CD8-positive, alpha-beta T cell (primary cell): ENCODE measurements at regions of chr11 and their contacts with region 1.

Region 1: DNA sequence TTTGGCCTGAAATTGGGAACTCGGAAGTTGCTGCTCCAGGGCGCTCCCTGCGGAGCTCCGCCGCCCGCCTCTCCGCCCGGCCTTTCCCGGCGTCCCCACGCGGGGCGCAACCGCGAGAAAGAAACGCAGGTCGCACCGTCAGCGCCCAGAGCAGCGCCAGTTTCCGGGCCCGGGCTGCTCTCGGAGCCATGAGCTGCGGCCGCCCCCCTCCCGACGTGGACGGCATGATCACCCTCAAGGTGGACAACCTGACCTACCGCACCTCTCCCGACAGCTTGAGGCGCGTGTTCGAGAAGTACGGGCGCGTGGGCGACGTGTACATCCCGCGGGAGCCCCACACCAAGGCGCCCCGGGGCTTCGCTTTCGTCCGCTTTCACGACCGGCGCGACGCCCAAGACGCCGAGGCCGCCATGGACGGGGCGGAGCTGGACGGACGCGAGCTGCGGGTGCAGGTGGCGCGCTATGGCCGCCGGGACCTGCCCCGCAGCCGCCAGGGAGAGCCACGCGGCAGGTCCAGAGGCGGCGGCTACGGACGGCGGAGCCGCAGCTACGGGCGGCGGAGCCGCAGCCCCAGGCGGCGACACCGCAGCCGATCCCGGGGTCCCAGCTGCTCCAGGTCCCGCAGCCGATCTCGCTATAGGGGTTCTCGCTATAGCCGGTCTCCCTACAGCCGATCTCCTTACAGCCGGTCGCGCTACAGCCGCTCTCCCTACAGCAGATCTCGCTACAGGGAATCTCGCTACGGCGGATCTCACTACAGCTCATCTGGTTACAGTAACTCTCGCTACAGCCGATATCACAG is 521 bp downstream of the SRSF8 start:
- DNase-seq: peak; percentile 45 to 88 (median 71)
- ATAC-seq: peak; percentile 61
- H3K4me3 ChIP-seq: peak overlapping the region; percentile 85 to 94
- H3K4me3 Mint-ChIP-seq: peak overlapping the region; percentile 96
- H3K27ac ChIP-seq: peak overlapping the region; percentile 90 to 92
- H3K27ac Mint-ChIP-seq: peak overlapping the region; percentile 97
- H3K4me1 ChIP-seq: peaks cover 23% of the 10 kb centered on the region
- H3K4me1 Mint-ChIP-seq: peaks cover 33% of the 10 kb centered on the region
- H3K27me3 ChIP-seq: no peaks in the 10 kb centered on the region
- H3K27me3 Mint-ChIP-seq: no peaks in the 10 kb centered on the region
- CTCF ChIP-seq: peak; percentile 46

Region 2: DNA sequence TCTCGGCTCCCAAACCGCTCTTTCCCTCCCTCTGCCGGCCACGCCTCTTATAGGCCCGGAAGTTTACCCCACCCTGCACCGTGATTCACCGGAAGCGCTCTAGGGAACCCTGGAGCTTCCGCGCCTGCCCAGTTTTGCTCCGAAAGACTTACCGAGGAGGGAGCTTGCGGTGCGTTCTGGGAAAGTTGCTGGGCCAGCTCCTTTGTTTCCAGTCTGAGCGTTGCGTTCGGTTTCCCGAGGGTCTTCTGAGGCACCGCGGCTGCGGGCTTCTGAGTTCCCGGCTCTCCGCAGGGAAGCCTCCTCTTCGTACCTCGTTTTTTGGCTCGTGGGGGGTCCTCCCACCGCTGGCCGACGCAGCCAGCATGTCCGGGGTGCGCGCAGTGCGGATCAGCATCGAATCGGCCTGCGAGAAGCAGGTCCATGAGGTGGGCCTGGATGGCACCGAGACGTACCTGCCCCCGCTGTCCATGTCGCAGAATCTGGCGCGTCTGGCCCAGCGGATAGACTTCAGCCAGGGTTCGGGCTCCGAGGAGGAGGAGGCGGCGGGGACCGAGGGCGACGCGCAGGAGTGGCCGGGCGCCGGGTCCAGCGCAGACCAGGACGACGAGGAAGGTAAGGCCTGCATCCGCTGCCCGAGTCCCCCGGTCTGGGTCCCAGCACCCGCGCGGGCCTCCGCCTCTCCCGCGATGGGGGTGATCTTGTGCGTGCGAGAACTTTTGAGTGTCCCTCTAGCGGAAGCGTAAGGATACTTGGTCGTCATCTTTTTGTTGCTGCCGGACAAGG is 1282.9 kb before region 1 on chr11 and contains the start of gene MED17:
- CTCF ChIA-PET with region 1: no interaction called
- POLR2A ChIA-PET with region 1: interaction called, 6 read pairs
- intact Hi-C with region 1: loop called in 1 of 2 experiments (anchors 10 kb)
- DNase-seq: peak; percentile 68 to 94 (median 89)
- ATAC-seq: peak; percentile 94
- H3K4me3 ChIP-seq: peak within 1 kb of the TSS; percentile 99 to 100
- H3K4me3 Mint-ChIP-seq: peak within 1 kb of the TSS; percentile 96
- H3K27ac ChIP-seq: peak within 1 kb of the TSS; percentile 94 to 96
- H3K27ac Mint-ChIP-seq: peak within 1 kb of the TSS; percentile 94
- H3K4me1 ChIP-seq: peaks cover 28% of the 10 kb centered on the region
- H3K4me1 Mint-ChIP-seq: peaks cover 40% of the 10 kb centered on the region
- H3K27me3 ChIP-seq: no peaks in the 10 kb centered on the region
- H3K27me3 Mint-ChIP-seq: no peaks in the 10 kb centered on the region
- CTCF ChIP-seq: peak; percentile 52
- total RNA-seq, gene MED17: 63.7 to 65.9 TPM

Region 3: GRCh38 chr11:94876645-94877442 is 190.4 kb before region 1 on chr11:
- CTCF ChIA-PET with region 1: no interaction called
- POLR2A ChIA-PET with region 1: no interaction called
- intact Hi-C with region 1: no loop called
- DNase-seq: peak in 7 of 9 experiments; percentile 13 to 44 (median 37)
- ATAC-seq: peak; percentile 56
- H3K4me3 ChIP-seq: no peak overlapping the region
- H3K4me3 Mint-ChIP-seq: no peak overlapping the region
- H3K27ac ChIP-seq: no peak overlapping the region
- H3K27ac Mint-ChIP-seq: no peak overlapping the region
- H3K4me1 ChIP-seq: peaks cover 9% of the 10 kb centered on the region
- H3K4me1 Mint-ChIP-seq: peaks cover 14% of the 10 kb centered on the region
- H3K27me3 ChIP-seq: no peaks in the 10 kb centered on the region
- H3K27me3 Mint-ChIP-seq: no peaks in the 10 kb centered on the region
- CTCF ChIP-seq: no peak

Region 4: GRCh38 chr11:94925422-94926270 is 141.6 kb before region 1 on chr11:
- CTCF ChIA-PET with region 1: no interaction called
- POLR2A ChIA-PET with region 1: interaction called, 19 read pairs
- intact Hi-C with region 1: no loop called
- DNase-seq: peak in 1 of 9 experiments; percentile 27
- ATAC-seq: peak; percentile 21
- H3K4me3 ChIP-seq: no peak overlapping the region
- H3K4me3 Mint-ChIP-seq: peak overlapping the region; percentile 13
- H3K27ac ChIP-seq: peak overlapping the region in 1 of 2 experiments; percentile 33
- H3K27ac Mint-ChIP-seq: peak overlapping the region; percentile 94
- H3K4me1 ChIP-seq: peaks cover 37% of the 10 kb centered on the region
- H3K4me1 Mint-ChIP-seq: peaks cover 51% of the 10 kb centered on the region
- H3K27me3 ChIP-seq: no peaks in the 10 kb centered on the region
- H3K27me3 Mint-ChIP-seq: peaks cover 2% of the 10 kb centered on the region
- CTCF ChIP-seq: no peak

Region 5: DNA sequence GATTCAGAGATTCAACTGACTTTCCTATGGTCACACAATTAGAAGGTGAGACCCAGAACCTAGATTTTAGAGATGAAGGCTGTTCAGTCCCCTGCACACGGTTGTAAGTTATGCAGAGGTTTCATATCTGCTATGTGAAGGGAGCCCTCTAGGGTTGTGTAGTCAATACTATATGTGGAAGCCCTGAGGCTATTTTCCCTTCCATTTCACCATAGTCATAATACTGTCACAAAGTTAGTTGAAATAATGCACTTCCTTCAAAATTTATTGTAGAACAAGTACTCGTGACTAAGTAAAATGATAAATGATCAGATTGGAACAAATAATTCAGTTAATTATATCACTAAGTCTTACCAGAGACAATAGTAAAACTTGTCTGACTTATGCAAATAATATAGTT is 71.2 kb after region 1 on chr11:
- CTCF ChIA-PET with region 1: interaction called, 12 read pairs
- POLR2A ChIA-PET with region 1: no interaction called
- intact Hi-C with region 1: loop called in 1 of 2 experiments (anchors 1 kb)
- DNase-seq: peak in 1 of 9 experiments; percentile 20
- ATAC-seq: no peak
- H3K4me3 ChIP-seq: no peak overlapping the region
- H3K4me3 Mint-ChIP-seq: no peak overlapping the region
- H3K27ac ChIP-seq: no peak overlapping the region
- H3K27ac Mint-ChIP-seq: no peak overlapping the region
- H3K4me1 ChIP-seq: no peaks in the 10 kb centered on the region
- H3K4me1 Mint-ChIP-seq: no peaks in the 10 kb centered on the region
- H3K27me3 ChIP-seq: no peaks in the 10 kb centered on the region
- H3K27me3 Mint-ChIP-seq: peaks cover 6% of the 10 kb centered on the region
- CTCF ChIP-seq: no peak

Region 6: DNA sequence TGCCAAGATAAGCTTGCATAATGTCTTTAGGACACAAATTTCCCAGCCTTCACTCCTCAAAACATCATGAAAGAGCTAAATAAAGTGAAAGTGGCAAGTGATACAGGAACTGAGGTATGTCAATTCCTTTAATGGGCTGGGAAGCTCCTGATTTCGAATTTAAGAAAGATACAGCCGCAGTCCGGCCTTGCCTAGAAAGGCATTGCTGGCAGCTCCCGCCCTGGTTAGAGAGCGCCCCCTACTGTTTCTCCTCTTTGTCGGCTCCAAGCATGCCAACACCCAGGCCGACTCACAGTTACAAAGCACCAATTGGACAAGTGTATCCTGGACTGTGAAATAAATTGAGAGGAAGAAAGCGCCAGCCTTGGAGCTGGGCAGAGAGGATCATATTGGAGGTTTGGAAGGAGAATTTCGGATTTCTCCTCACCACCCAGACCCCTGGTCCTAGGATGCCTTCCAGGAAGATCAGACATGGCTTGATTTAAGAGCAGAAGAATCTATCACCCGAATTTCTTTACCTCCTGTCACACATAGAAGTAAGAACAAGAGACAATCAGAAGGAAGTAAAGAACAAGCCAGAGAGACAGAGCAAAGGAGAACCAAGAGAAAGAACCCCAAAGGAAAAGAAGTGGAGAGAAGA is 638.4 kb after region 1 on chr11:
- CTCF ChIA-PET with region 1: interaction called, 6 read pairs
- POLR2A ChIA-PET with region 1: interaction called, 5 read pairs
- intact Hi-C with region 1: loop called (anchors 1 to 2 kb)
- DNase-seq: peak; percentile 64 to 90 (median 87)
- ATAC-seq: peak; percentile 90
- H3K4me3 ChIP-seq: no peak overlapping the region
- H3K4me3 Mint-ChIP-seq: no peak overlapping the region
- H3K27ac ChIP-seq: no peak overlapping the region
- H3K27ac Mint-ChIP-seq: no peak overlapping the region
- H3K4me1 ChIP-seq: peaks cover 44% of the 10 kb centered on the region
- H3K4me1 Mint-ChIP-seq: peaks cover 8% of the 10 kb centered on the region
- H3K27me3 ChIP-seq: no peaks in the 10 kb centered on the region
- H3K27me3 Mint-ChIP-seq: no peaks in the 10 kb centered on the region
- CTCF ChIP-seq: peak; percentile 83

Region 7: DNA sequence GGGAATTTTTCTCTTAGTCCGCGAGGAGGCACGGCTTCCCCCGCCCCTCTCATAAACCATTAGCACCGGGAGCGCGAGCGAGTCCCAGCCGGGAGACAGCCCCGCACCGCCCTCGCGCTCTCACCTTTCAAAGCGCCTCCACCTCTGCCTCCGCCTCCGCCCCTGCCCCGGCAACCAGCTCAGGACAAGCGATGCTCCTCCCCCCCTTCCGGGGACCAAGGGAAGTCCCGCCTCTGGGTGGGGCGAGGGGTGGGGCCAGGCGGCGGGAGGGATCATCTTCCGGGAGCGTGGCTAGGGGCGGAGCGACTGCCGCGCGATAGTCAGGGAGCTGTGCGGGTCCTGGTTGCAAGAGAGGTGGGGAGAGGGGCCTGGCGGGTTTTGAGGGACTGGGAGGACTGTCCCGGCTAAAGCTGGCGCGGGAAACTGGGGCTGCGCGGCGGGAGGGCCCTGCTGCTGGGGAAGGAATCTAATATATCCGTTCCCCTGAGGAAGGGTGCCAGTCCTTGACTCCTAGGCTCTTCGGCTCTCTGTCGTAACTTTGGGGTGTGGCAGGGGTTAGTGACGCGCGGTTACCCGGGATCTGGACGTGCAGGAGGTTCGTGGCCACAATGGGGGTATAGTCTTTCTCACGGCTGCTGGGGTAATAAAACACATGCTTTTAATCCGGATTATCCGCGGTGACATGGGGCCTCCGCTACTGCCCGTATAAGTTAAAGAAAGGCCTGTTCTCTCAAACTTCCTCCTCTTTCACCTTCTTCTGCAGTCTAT is 1322.7 kb after region 1 on chr11 and contains the starts of genes CCDC82 and JRKL:
- CTCF ChIA-PET with region 1: no interaction called
- POLR2A ChIA-PET with region 1: interaction called, 3 read pairs
- intact Hi-C with region 1: loop called (anchors 5 kb)
- DNase-seq: peak; percentile 96 to 99 (median 98)
- ATAC-seq: peak; percentile 97
- H3K4me3 ChIP-seq: peak within 1 kb of the TSS; percentile 87 to 93
- H3K4me3 Mint-ChIP-seq: peak within 1 kb of the TSS; percentile 94
- H3K27ac ChIP-seq: peak within 1 kb of the TSS; percentile 78 to 79
- H3K27ac Mint-ChIP-seq: peak within 1 kb of the TSS; percentile 96
- H3K4me1 ChIP-seq: peaks cover 15% of the 10 kb centered on the region
- H3K4me1 Mint-ChIP-seq: peaks cover 52% of the 10 kb centered on the region
- H3K27me3 ChIP-seq: no peaks in the 10 kb centered on the region
- H3K27me3 Mint-ChIP-seq: no peaks in the 10 kb centered on the region
- CTCF ChIP-seq: no peak
- total RNA-seq, gene CCDC82: 20.0 to 23.0 TPM
- total RNA-seq, gene JRKL: 2.5 to 2.6 TPM